ENCODE measurements at regions of chr2 and their contacts with region 1.

Region 1: DNA sequence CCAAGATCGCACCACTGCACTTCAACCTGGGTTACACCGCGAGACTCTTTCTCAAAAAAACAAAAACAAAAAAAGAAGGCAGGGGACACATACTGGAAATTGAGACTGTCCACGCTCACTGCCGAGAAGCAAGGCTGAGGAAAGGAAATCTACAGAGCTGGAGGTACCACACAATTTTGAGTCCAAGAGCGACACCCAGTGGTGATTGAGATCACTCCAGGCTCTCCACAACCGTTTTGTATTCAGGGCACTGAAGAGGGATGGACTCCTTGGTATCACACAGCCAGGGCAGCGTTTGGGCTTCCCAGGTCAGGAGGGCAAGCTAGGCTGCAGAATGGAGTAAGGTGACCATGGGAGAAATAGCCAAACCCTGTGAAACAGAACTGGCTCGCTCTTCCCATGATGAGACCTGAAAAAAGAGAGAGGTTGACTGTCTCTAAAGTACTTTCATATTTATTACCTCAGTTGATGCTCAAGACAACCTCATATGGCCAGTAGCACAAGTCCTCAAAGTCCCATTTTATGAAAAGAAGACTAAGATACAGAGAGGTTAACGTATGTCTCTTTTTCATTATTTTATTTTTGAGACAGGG is 74.5 kb upstream of the YPEL5 start:
- DNase-seq: peak; percentile 82
- H3K4me3 ChIP-seq: no peak overlapping the region
- H3K27ac ChIP-seq: no peak overlapping the region
- H3K4me1 ChIP-seq: peaks cover 0 to 2% of the 10 kb centered on the region in 2 experiments; a peak in 1 of 4 replicates
- H3K27me3 ChIP-seq: peaks cover 6% of the 10 kb centered on the region; the same call in 1 of the 2 replicates
- CTCF ChIP-seq: peak; percentile 87
- EP300 ChIP-seq: no peak
- RAD21 ChIP-seq: peak; percentile 99

Region 2: DNA sequence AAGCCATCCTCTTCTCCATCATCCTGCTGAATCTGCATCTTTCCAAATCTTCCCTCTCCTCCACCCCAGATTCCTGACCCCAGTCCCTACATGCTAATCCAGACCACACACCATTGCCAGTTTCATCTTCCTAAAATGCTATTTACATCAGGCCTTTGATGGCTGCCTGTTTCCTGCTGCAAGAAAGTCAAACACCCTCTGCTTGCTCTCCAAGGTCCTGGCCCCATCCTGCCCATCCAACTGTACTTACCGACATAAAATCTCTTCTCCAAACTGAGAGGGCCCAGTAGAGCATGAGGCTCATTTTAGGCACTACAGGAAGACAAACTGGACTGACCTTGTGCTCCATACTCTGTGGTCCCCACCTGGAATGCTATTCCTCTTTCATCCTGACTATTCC is 170.0 kb before region 1 on chr2:
- CTCF ChIA-PET with region 1: interaction called, 16 read pairs
- POLR2A ChIA-PET with region 1: no interaction called
- DNase-seq: no peak
- H3K4me3 ChIP-seq: no peak overlapping the region
- H3K27ac ChIP-seq: no peak overlapping the region
- H3K4me1 ChIP-seq: peaks cover 0 to 23% of the 10 kb centered on the region in 2 experiments; a peak in 2 of 4 replicates
- H3K27me3 ChIP-seq: no peaks in the 10 kb centered on the region; the same call in 1 of the 2 replicates
- CTCF ChIP-seq: no peak
- EP300 ChIP-seq: no peak
- RAD21 ChIP-seq: no peak

Region 3: GRCh38 chr2:30048636-30049180 is 23.6 kb before region 1 on chr2:
- CTCF ChIA-PET with region 1: interaction called, 11 read pairs
- POLR2A ChIA-PET with region 1: no interaction called
- DNase-seq: no peak
- H3K4me3 ChIP-seq: no peak overlapping the region
- H3K27ac ChIP-seq: no peak overlapping the region
- H3K4me1 ChIP-seq: no peaks in the 10 kb centered on the region
- H3K27me3 ChIP-seq: peaks cover 6% of the 10 kb centered on the region; the same call in 1 of the 2 replicates
- CTCF ChIP-seq: no peak
- EP300 ChIP-seq: no peak
- RAD21 ChIP-seq: no peak

Region 4: DNA sequence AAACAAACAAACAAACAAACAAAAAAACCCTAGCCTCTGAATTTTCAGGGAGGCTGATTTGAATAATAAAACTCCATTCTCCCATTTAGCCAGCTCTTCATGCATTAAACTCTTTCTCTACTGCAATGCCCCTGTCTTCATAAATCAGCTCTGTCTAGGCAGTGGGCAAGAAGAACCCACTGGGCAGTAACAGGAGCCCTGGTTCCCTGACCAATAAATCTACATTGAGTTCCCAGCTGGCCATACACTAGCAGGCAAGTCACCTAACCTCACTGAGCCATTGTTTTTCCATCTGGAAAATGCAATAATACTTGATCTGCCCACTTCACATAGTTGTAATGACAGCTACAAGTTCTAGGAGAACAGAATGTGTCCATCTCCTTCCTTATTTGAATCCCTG is 16.8 kb after region 1 on chr2:
- CTCF ChIA-PET with region 1: interaction called, 26 read pairs
- POLR2A ChIA-PET with region 1: no interaction called
- DNase-seq: no peak
- H3K4me3 ChIP-seq: no peak overlapping the region
- H3K27ac ChIP-seq: no peak overlapping the region
- H3K4me1 ChIP-seq: no peaks in the 10 kb centered on the region; a peak in 1 of 4 replicates
- H3K27me3 ChIP-seq: no peaks in the 10 kb centered on the region
- CTCF ChIP-seq: no peak
- EP300 ChIP-seq: no peak
- RAD21 ChIP-seq: no peak

Region 5: GRCh38 chr2:30136764-30137444 is 64.6 kb after region 1 on chr2:
- CTCF ChIA-PET with region 1: interaction called, 11 read pairs
- POLR2A ChIA-PET with region 1: no interaction called
- DNase-seq: no peak
- H3K4me3 ChIP-seq: no peak overlapping the region
- H3K27ac ChIP-seq: no peak overlapping the region
- H3K4me1 ChIP-seq: no peaks in the 10 kb centered on the region
- H3K27me3 ChIP-seq: no peaks in the 10 kb centered on the region
- CTCF ChIP-seq: no peak
- EP300 ChIP-seq: no peak
- RAD21 ChIP-seq: no peak